ENCODE measurements at regions of chr1 and their contacts with region 1.

Region 1: DNA sequence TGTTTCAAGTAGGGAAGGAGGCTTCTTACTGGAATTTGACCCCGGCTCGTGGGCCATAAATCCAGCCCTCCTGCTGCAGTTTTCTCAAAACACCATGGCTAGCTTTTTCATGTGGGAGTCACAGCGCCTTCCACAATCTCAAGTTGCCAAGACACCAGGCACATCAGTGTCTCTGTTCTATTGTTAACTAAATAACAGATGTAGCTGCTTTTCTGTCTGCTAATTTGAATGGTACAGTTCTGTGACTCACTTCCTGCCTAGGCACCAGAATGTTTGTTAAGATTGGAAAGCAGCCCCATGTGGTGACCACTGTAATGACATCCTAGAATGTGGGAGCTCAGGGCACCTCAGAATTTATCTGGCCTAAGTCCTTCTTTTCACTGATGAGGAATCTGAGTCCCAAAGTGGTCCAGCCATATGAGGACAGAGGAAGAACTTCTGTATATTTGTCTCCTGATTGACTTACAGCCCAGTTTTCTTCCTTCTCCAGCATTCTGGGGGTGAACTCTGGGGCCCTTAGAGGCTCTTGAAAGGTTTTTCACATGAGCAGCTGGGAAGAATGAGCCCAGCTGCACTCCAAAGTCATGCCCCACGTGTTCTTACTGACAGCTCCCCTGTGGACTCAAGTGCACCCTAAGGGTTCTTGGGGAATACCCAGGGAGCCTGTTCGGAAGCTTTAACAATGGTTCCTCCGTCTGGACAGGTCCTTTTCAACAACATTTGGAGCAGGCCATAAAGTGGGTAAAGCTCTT is 27.5 kb downstream of the TRIM45 start:
- DNase-seq: peak; percentile 66
- H3K4me3 ChIP-seq: no peak overlapping the region
- H3K27ac ChIP-seq: peak overlapping the region; percentile 86
- H3K4me1 ChIP-seq: peaks cover 14% of the 10 kb centered on the region
- H3K27me3 ChIP-seq: no peaks in the 10 kb centered on the region
- CTCF ChIP-seq: peak; percentile 56 to 57

Region 2: GRCh38 chr1:117179528-117179927 is 85.5 kb after region 1 on chr1:
- CTCF ChIA-PET with region 1: no interaction called
- dilution Hi-C with region 1: loop called (anchors 5 kb)
- in situ Hi-C with region 1: no loop called
- intact Hi-C with region 1: no loop called
- DNase-seq: peak; percentile 22
- H3K4me3 ChIP-seq: no peak overlapping the region
- H3K27ac ChIP-seq: no peak overlapping the region
- H3K4me1 ChIP-seq: no peaks in the 10 kb centered on the region
- H3K27me3 ChIP-seq: no peaks in the 10 kb centered on the region
- CTCF ChIP-seq: no peak

Measured in mammary epithelial cell (primary cell).